ENCODE measurements at regions of chr3 and their contacts with region 1.

Region 1: DNA sequence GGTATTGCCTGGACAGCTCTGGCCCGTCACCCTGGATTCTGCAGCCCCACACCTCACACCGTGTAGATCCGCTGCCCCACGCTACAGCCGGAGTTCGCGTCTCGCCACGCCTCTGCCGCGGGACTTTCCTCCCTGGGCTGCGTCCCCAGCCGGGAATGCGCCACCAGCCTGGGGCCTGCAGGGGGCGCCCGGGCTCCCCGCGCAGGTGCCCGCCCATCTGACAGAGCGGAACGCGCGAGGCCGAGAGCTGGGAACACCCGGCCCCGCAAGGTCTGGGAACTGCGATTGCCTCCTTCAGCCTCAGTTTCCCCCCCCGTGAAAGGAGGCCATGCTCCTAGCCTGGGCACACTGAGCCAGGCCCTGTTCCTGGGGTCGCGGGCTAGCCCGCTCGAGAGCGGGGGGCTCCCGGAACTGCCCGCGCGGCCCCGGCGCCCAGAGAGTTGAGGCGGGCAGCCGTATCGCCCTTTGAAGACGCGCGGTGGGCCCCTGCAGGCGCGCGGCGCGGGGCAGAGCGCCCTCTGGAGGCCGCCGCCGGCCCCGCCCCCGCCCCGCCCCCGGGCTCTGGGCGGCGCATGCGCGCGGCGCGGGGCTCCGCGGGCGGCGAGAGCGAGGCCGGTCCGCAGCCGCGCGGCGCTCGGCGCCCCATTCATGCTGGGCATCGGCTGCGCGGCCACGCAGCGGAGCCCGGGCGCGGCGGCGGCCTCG is at the start of gene PLXNA1:
- H3K4me3 Mint-ChIP-seq: peak within 1 kb of the TSS; percentile 73
- H3K27ac Mint-ChIP-seq: peak within 1 kb of the TSS; percentile 90
- H3K4me1 Mint-ChIP-seq: peaks cover 59% of the 10 kb centered on the region
- H3K27me3 Mint-ChIP-seq: peaks cover 69% of the 10 kb centered on the region

Region 2: DNA sequence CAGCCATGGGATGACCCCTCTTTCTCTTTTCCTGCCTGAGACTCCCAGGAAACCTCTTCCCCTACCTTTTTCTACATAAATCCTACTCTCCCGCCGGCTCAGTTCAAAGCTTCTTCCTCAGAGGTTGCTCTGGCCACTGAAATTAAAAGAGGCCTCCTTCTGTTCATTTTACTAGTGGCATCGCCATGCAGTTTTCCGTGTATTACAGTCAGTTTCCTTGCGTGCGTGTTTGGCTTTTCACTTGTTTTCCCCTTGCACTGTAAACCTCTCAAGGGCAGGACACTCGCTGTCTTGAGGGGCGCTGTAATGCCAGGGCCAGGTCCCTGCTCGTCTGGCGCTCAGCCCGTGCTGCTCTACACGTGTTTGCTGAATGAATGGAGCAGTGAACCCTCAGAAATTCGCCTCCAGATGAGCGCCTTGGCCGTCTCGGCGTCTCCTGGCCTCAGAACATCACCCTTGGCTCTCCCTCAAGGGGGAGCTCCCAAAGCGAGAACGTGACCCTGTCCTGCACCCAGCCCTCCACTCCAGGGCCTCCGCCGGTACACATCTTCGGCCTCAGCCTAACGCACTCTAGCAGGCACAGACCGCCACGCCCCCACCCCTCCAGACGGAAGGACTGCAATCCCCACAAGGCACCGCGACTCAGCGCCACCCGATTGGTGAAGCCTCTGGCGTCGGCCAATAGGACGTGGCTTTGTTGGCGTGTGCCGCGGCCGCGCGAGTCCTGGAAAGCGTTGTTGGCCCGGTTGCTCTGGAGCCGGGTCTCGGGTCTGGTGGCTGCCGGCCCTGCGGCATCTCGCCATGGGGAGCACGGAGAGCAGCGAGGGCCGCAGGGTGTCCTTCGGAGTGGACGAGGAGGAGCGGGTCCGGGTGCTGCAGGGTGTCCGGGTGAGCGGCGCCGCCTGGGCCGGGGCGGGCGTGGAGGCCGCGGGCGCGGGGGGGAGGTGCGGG is 278.8 kb before region 1 on chr3 and contains the start of gene CHCHD6:
- intact Hi-C with region 1: loop called (anchors 5 kb)
- H3K4me3 Mint-ChIP-seq: peak within 1 kb of the TSS; percentile 99
- H3K27ac Mint-ChIP-seq: peak within 1 kb of the TSS; percentile 82
- H3K4me1 Mint-ChIP-seq: peaks cover 20% of the 10 kb centered on the region
- H3K27me3 Mint-ChIP-seq: peaks cover 62% of the 10 kb centered on the region

Region 3: GRCh38 chr3:126752303-126752842 is 230.2 kb before region 1 on chr3:
- intact Hi-C with region 1: loop called (anchors 1 kb)
- H3K4me3 Mint-ChIP-seq: no peak overlapping the region
- H3K27ac Mint-ChIP-seq: no peak overlapping the region
- H3K4me1 Mint-ChIP-seq: no peaks in the 10 kb centered on the region
- H3K27me3 Mint-ChIP-seq: no peaks in the 10 kb centered on the region

Region 4: GRCh38 chr3:126911162-126912026 is 71.2 kb before region 1 on chr3:
- intact Hi-C with region 1: loop called (anchors 2 kb)
- H3K4me3 Mint-ChIP-seq: peak overlapping the region; percentile 55
- H3K27ac Mint-ChIP-seq: peak overlapping the region; percentile 98
- H3K4me1 Mint-ChIP-seq: peaks cover 56% of the 10 kb centered on the region
- H3K27me3 Mint-ChIP-seq: peaks cover 37% of the 10 kb centered on the region

Region 5: DNA sequence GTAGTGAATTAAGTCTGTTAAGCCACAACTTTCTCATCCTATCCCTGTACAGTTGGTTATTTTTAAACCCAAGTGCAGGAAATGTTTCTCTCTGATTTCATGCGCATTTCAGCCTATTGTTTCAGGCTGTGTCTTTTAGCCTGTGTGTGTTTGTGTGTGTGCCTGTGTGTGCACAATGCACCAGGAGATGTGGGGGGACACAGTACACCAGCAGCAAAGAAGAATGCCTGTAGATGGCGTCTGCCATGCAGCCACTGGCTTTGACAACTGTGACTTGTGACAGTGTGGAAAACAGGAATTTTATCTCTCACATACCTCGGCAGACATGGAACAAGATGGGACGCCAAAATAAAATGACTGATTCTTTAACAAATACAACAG is 43.3 kb before region 1 on chr3:
- intact Hi-C with region 1: no loop called
- H3K4me3 Mint-ChIP-seq: no peak overlapping the region
- H3K27ac Mint-ChIP-seq: no peak overlapping the region
- H3K4me1 Mint-ChIP-seq: peaks cover 13% of the 10 kb centered on the region
- H3K27me3 Mint-ChIP-seq: peaks cover 71% of the 10 kb centered on the region

Region 6: DNA sequence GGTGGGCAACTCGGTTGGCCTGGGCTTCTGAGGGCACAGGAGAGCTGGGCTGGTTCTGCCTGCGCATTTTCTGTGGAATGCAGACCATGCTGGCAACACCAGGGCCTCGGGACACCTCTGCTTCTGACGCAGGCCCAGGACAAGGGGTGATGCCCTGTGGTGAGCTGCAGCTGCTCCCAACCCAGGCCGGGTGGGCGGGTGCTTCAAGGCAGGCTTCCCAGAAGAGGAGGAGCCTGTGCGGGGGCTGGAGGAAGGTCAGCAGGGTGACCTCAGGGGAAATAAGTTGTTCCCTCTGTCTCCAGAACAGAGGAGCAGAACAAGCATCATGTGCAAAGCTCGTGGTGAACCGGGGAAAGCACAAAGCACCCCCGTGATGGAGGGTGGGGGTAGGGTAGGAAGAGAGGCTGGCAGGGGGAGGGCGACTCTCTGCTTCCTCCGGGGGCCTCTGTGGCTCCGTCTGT is 10.7 kb before region 1 on chr3:
- intact Hi-C with region 1: loop called (anchors 1 kb)
- H3K4me3 Mint-ChIP-seq: no peak overlapping the region
- H3K27ac Mint-ChIP-seq: peak overlapping the region; percentile 87
- H3K4me1 Mint-ChIP-seq: peaks cover 56% of the 10 kb centered on the region
- H3K27me3 Mint-ChIP-seq: peaks cover 77% of the 10 kb centered on the region

Region 7: GRCh38 chr3:127455541-127456450 is 473.2 kb after region 1 on chr3:
- intact Hi-C with region 1: loop called (anchors 5 kb)
- H3K4me3 Mint-ChIP-seq: no peak overlapping the region
- H3K27ac Mint-ChIP-seq: no peak overlapping the region
- H3K4me1 Mint-ChIP-seq: peaks cover 18% of the 10 kb centered on the region
- H3K27me3 Mint-ChIP-seq: peaks cover 71% of the 10 kb centered on the region